ENCODE measurements at regions of chr11 and their contacts with region 1.

Region 1: GRCh38 chr11:65919146-65920033 is at the start of gene DRAP1:
- DNase-seq: peak; percentile 99 to 100
- ATAC-seq: peak; percentile 95
- H3K4me3 ChIP-seq: peak within 1 kb of the TSS; percentile 68 to 89
- H3K27ac ChIP-seq: peak within 1 kb of the TSS; percentile 83 to 91
- H3K4me1 ChIP-seq: peaks cover 0 to 1% of the 10 kb centered on the region in 2 donors
- H3K27me3 ChIP-seq: no peaks in the 10 kb centered on the region
- total RNA-seq, gene DRAP1: 65.9 to 86.4 TPM

Region 2: GRCh38 chr11:65857853-65858638 is 61.3 kb before region 1 on chr11 and contains the start of gene CFL1:
- intact Hi-C with region 1: loop called in 1 of 2 experiments (anchors 1 kb)
- DNase-seq: peak; percentile 99 to 100
- ATAC-seq: peak; percentile 88
- H3K4me3 ChIP-seq: peak within 1 kb of the TSS; percentile 64 to 77
- H3K27ac ChIP-seq: peak within 1 kb of the TSS; percentile 84 to 93
- H3K4me1 ChIP-seq: no peaks in the 10 kb centered on the region
- H3K27me3 ChIP-seq: no peaks in the 10 kb centered on the region
- total RNA-seq, gene CFL1: 563 to 812 TPM

Region 3: DNA sequence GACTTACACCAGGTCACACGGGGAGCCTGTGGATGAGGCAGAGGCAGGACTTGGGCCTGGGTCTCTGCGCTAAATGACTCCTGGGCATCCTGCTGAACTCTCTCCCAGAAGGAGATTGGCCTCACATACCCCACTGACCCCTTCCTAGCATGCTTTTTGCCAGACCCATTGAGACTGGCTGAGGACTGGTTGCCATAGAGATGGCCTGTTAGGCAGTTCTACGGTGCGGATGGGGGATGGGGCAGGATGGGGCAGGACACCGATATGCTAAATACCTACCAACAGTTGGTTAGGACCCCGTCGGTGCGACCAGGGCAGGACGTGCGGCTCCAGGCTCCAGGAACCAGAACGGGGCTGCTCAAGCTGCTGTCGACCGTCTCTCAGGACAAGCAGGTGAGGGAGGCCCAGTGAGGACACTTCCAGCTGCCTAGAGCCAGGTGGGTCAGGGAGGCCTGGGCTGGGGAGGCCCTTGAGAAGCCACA is 26.1 kb after region 1 on chr11 and contains the start of gene TSGA10IP:
- intact Hi-C with region 1: no loop called
- DNase-seq: no peak
- ATAC-seq: no peak
- H3K4me3 ChIP-seq: no peak within 1 kb of the TSS
- H3K27ac ChIP-seq: no peak within 1 kb of the TSS
- H3K4me1 ChIP-seq: no peaks in the 10 kb centered on the region
- H3K27me3 ChIP-seq: no peaks in the 10 kb centered on the region
- total RNA-seq, gene TSGA10IP: not detected

Region 4: DNA sequence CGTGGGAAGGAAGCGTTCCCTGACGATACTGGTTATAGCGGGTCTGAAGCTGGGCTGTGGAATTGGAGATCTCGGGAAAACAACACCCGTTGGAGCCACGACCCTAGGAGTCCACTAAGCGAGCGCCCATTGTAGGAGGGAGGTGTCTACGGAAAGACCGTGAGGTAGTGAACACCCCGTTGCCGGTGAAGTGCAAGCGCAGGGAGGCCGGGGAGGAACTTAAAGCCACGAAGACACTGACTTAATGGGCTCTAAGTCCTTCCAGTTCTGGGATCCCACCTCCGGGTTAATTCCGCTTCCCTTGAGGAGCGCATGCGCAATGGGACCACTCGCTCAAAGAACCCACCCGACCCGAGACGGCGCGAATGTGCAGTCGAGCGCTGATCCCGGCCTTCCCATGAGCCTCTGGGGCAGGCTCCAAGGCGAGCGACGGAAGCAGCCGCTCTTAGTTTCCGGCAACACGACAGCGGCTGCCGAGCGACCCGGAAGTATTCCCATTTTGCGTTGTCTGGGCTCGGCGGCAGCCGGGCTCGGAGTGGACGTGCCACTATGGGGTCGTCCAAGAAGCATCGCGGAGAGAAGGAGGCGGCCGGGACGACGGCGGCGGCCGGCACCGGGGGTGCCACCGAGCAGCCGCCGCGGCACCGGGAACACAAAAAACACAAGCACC is 42.0 kb after region 1 on chr11 and contains the start of gene SART1:
- intact Hi-C with region 1: loop called (anchors 1 to 5 kb)
- DNase-seq: peak; percentile 99
- ATAC-seq: peak; percentile 97
- H3K4me3 ChIP-seq: peak within 1 kb of the TSS; percentile 74 to 86
- H3K27ac ChIP-seq: peak within 1 kb of the TSS; percentile 11 to 59
- H3K4me1 ChIP-seq: no peaks in the 10 kb centered on the region
- H3K27me3 ChIP-seq: no peaks in the 10 kb centered on the region
- total RNA-seq, gene SART1: 50.9 to 52.3 TPM

Measured in aorta (tissue), 5 donors.